Mammary epithelial cell (primary cell): ENCODE measurements at regions of chr1 and their contacts with region 1.

Region 1: GRCh38 chr1:156383023-156383422 is 14.0 kb downstream of the RHBG start:
- DNase-seq: peak; percentile 35
- H3K4me3 ChIP-seq: no peak overlapping the region
- H3K27ac ChIP-seq: no peak overlapping the region
- H3K4me1 ChIP-seq: no peaks in the 10 kb centered on the region
- H3K27me3 ChIP-seq: peaks cover 4% of the 10 kb centered on the region
- CTCF ChIP-seq: peak; percentile 87 to 93

Region 2: GRCh38 chr1:156226116-156226538 is 156.9 kb before region 1 on chr1:
- CTCF ChIA-PET with region 1: no interaction called
- dilution Hi-C with region 1: no loop called
- in situ Hi-C with region 1: no loop called
- intact Hi-C with region 1: no loop called
- DNase-seq: no peak
- H3K4me3 ChIP-seq: no peak overlapping the region
- H3K27ac ChIP-seq: no peak overlapping the region
- H3K4me1 ChIP-seq: peaks cover 12% of the 10 kb centered on the region
- H3K27me3 ChIP-seq: no peaks in the 10 kb centered on the region
- CTCF ChIP-seq: no peak

Region 3: GRCh38 chr1:156310962-156311361 is 72.1 kb before region 1 on chr1:
- CTCF ChIA-PET with region 1: no interaction called
- dilution Hi-C with region 1: loop called (anchors 5 kb)
- in situ Hi-C with region 1: no loop called
- intact Hi-C with region 1: no loop called
- DNase-seq: no peak
- H3K4me3 ChIP-seq: no peak overlapping the region
- H3K27ac ChIP-seq: no peak overlapping the region
- H3K4me1 ChIP-seq: no peaks in the 10 kb centered on the region
- H3K27me3 ChIP-seq: no peaks in the 10 kb centered on the region
- CTCF ChIP-seq: no peak

Region 4: GRCh38 chr1:156445789-156446263 is 62.8 kb after region 1 on chr1:
- CTCF ChIA-PET with region 1: interaction called, 20 read pairs
- dilution Hi-C with region 1: no loop called
- in situ Hi-C with region 1: loop called (anchors 5 kb)
- intact Hi-C with region 1: loop called (anchors 1 kb)
- DNase-seq: peak; percentile 73
- H3K4me3 ChIP-seq: no peak overlapping the region
- H3K27ac ChIP-seq: no peak overlapping the region
- H3K4me1 ChIP-seq: peaks cover 4% of the 10 kb centered on the region
- H3K27me3 ChIP-seq: no peaks in the 10 kb centered on the region
- CTCF ChIP-seq: peak; percentile 98 to 99

Region 5: GRCh38 chr1:156500797-156501499 is 117.9 kb after region 1 on chr1:
- CTCF ChIA-PET with region 1: interaction called, 11 read pairs
- dilution Hi-C with region 1: no loop called
- in situ Hi-C with region 1: no loop called
- intact Hi-C with region 1: no loop called
- DNase-seq: peak; percentile 94
- H3K4me3 ChIP-seq: peak overlapping the region; percentile 75 to 95 (median 84)
- H3K27ac ChIP-seq: peak overlapping the region; percentile 93
- H3K4me1 ChIP-seq: peaks cover 58% of the 10 kb centered on the region
- H3K27me3 ChIP-seq: no peaks in the 10 kb centered on the region
- CTCF ChIP-seq: peak; percentile 28 to 66

Region 6: GRCh38 chr1:156601122-156601830 is 218.3 kb after region 1 on chr1 and contains the start of gene GPATCH4:
- CTCF ChIA-PET with region 1: interaction called, 16 read pairs
- dilution Hi-C with region 1: no loop called
- in situ Hi-C with region 1: no loop called
- intact Hi-C with region 1: no loop called
- DNase-seq: peak; percentile 81
- H3K4me3 ChIP-seq: peak within 1 kb of the TSS; percentile 55 to 77 (median 66)
- H3K27ac ChIP-seq: peak within 1 kb of the TSS; percentile 76
- H3K4me1 ChIP-seq: peaks cover 18% of the 10 kb centered on the region
- H3K27me3 ChIP-seq: no peaks in the 10 kb centered on the region
- CTCF ChIP-seq: no peak
- total RNA-seq, gene GPATCH4: 16.3 to 49.7 TPM